ENCODE measurements at regions of chr1 and their contacts with region 1.

Region 1: DNA sequence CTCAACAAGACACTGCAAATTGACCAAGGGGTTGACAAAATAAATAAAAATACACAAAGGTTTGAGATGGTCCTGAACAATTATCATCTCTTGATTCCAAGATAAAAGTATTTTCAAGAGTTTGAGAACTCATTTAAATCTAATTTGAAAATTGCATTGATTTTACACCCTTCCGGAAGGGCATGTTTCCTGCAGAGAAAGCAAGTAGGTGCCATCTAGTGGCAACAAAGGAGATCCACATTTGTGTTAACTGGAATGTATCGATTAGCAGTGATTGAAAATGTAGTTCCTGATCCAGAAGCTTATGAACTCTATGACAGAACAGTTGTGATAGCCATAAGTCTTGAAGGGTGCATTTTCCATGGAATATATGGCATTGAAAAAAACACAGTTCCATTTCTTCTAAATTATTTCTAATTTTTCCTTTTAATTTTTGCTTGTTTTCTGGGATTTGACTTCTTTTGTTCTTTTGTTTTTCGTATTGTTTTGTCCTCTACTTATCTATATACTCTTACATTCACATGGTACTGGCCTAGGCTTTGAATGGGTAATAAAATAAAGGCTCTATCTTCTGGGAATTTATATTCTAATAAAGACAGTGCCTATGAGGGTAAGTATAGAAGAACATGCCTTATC is 143.7 kb downstream of the DNM3 start:
- ATAC-seq: peak in 4 of 8 experiments; percentile 41 to 65 (median 48)
- H3K4me3 ChIP-seq: no peak overlapping the region
- H3K27ac ChIP-seq: no peak overlapping the region
- H3K4me1 ChIP-seq: no peaks in the 10 kb centered on the region

Region 2: DNA sequence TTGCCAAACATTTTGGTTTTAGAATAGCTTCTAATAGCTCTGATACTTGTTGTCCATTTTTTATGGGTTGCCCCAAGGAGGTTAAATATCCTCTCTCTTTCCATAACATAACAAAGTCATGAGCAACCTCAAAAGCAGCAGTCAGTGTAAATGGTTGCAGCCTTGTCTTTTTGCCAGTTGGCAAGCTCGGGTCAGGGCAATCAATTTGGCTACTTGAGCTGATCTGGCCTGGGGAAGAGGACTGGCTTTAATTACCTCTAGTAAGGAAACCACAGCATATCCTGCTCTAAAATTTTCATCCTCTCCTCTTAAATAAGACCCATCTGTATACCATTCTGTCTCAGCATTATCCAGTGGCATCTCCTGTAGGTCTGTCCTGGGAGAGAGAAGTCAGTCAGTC is 692.2 kb before region 1 on chr1:
- in situ Hi-C with region 1: no loop called
- ATAC-seq: no peak
- H3K4me3 ChIP-seq: no peak overlapping the region
- H3K27ac ChIP-seq: no peak overlapping the region
- H3K4me1 ChIP-seq: no peaks in the 10 kb centered on the region

Region 3: GRCh38 chr1:171644805-171645483 is 340.0 kb before region 1 on chr1:
- in situ Hi-C with region 1: loop called in 3 of 9 experiments (anchors 25 kb)
- ATAC-seq: peak; percentile 55 to 88 (median 71)
- H3K4me3 ChIP-seq: no peak overlapping the region
- H3K27ac ChIP-seq: no peak overlapping the region
- H3K4me1 ChIP-seq: no peaks in the 10 kb centered on the region

Region 4: DNA sequence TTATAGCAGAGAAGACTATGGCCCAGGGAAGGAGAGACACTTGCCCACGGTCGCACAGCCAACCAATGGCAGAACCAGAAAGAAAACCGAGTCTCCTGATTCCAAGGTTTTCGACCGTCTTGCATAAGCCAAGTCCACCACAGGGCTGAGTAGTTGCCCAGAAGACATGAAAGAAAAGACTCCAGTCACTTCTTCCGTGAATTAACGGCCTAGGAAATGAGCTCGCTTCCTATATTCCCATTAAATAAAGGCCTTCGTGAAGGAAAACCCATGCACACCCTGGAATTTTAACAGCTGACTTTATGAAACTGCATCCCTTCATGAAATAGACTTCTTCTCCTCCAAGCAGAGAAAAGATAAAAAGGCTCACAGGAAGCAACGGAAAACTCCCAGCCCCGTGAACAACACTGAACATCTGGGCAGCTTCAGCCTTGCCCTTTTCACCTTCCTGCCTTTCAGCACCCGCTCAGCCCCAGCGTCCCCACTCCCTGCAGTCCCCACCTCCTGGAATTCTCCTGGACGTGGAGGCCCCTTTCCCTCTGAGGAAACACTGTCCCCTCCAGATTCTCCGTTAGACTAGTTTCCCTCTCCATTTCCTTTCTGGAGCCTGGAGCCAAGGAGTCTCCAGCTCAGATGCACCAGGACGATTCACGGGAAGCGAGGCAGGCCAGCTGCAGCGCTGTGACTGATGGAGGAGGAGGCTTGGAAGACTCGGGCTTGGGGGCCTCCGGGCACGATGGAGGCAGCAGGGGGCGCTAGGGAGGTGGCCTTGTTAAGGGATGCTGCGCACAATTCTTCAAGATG is 329.8 kb before region 1 on chr1:
- in situ Hi-C with region 1: loop called in 1 of 9 experiments (anchors 25 kb)
- ATAC-seq: peak in 3 of 8 experiments; percentile 88 to 92 (median 91)
- H3K4me3 ChIP-seq: no peak overlapping the region
- H3K27ac ChIP-seq: no peak overlapping the region
- H3K4me1 ChIP-seq: no peaks in the 10 kb centered on the region

Region 5: GRCh38 chr1:171801487-171801891 is 183.5 kb before region 1 on chr1:
- in situ Hi-C with region 1: loop called in 6 of 9 experiments (anchors 10 to 25 kb)
- ATAC-seq: peak; percentile 10 to 83 (median 68)
- H3K4me3 ChIP-seq: no peak overlapping the region
- H3K27ac ChIP-seq: no peak overlapping the region
- H3K4me1 ChIP-seq: no peaks in the 10 kb centered on the region

Region 6: GRCh38 chr1:171868217-171868803 is 116.7 kb before region 1 on chr1:
- in situ Hi-C with region 1: loop called in 1 of 9 experiments (anchors 25 kb)
- ATAC-seq: no peak
- H3K4me3 ChIP-seq: no peak overlapping the region
- H3K27ac ChIP-seq: no peak overlapping the region
- H3K4me1 ChIP-seq: no peaks in the 10 kb centered on the region